ENCODE measurements at regions of chr12 and their contacts with region 1.

Region 1: GRCh38 chr12:51482929-51483697 is 58.5 kb downstream of the SLC4A8 start:
- DNase-seq: peak; percentile 11
- H3K4me3 Mint-ChIP-seq: peak overlapping the region; percentile 76
- H3K27ac Mint-ChIP-seq: peak overlapping the region; percentile 96
- H3K4me1 Mint-ChIP-seq: peaks cover 47% of the 10 kb centered on the region
- H3K27me3 Mint-ChIP-seq: peaks cover 4% of the 10 kb centered on the region

Region 2: GRCh38 chr12:51409846-51410245 is 73.3 kb before region 1 on chr12:
- intact Hi-C with region 1: no loop called
- DNase-seq: no peak
- H3K4me3 Mint-ChIP-seq: no peak overlapping the region
- H3K27ac Mint-ChIP-seq: no peak overlapping the region
- H3K4me1 Mint-ChIP-seq: no peaks in the 10 kb centered on the region
- H3K27me3 Mint-ChIP-seq: peaks cover 26% of the 10 kb centered on the region

Region 3: GRCh38 chr12:51441583-51441982 is 41.5 kb before region 1 on chr12:
- intact Hi-C with region 1: loop called (anchors 5 kb)
- DNase-seq: peak; percentile 1
- H3K4me3 Mint-ChIP-seq: no peak overlapping the region
- H3K27ac Mint-ChIP-seq: no peak overlapping the region
- H3K4me1 Mint-ChIP-seq: peaks cover 42% of the 10 kb centered on the region
- H3K27me3 Mint-ChIP-seq: peaks cover 1% of the 10 kb centered on the region

Region 4: GRCh38 chr12:51726931-51727330 is 243.8 kb after region 1 on chr12:
- intact Hi-C with region 1: no loop called
- DNase-seq: no peak
- H3K4me3 Mint-ChIP-seq: no peak overlapping the region
- H3K27ac Mint-ChIP-seq: no peak overlapping the region
- H3K4me1 Mint-ChIP-seq: no peaks in the 10 kb centered on the region
- H3K27me3 Mint-ChIP-seq: peaks cover 35% of the 10 kb centered on the region

Measured in activated T-helper 1 cell treated with anti-CD3 and anti-CD28 coated beads, Interleukin-12 subunit alpha, Interleukin-12 subunit beta, Interleukin-2, Interleukin-4 antibody, amounts not matched to agents 30 ng/mL and 10 ng/mL and 1 ng/mL, durations not matched to agents 14 hours and 24 hours and 36 hours (primary cell).